ENCODE measurements at regions of chr11 and their contacts with region 1.

Region 1: DNA sequence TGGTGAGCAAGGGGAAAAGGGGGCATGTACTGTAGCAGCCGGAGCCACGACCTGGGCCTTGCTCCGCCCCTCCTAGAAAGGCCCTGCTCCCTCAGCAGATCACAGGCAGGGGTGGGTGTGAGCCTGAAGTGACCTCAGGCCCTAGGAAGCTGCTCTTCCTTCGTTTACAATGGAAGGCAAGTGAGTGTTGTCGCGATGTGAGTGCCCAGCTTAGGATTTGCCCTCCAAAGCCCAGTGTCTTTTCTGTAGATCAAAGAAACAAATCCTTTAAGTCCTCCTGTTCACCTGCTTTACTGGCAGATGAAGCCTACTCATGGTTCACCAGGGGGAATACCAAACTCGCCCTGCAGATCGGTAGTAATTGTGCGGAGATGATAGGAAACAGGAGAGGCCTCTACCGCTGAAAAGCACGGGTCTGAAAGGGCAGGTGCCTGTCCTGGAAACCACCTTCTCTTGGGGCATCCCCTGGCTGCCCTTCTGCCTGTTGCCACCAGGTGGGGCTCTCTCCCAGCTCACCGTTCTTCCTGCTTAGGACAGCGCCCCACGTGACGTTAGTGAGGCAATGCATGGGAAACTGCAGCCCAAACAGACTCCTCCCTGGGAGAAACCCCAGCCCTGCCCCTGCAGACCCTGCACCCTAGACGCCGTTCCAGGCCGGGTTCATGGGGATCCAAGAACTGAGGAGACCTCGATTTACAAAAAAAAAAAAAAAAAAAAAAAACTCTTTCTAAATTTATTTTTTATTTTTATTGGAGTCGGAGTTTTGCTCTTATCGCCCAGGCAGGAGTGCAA is 45.9 kb upstream of the RAB1B start:
- DNase-seq: peak; percentile 97
- H3K4me3 ChIP-seq: no peak overlapping the region
- H3K27ac ChIP-seq: no peak overlapping the region
- H3K4me1 ChIP-seq: peaks cover 0 to 7% (median 6%) of the 10 kb centered on the region in 4 donors
- H3K27me3 ChIP-seq: no peaks in the 10 kb centered on the region
- CTCF ChIP-seq: peak; percentile 98 to 100 (median 98)
- EP300 ChIP-seq: no peak
- POLR2A ChIP-seq: no peak

Region 2: GRCh38 chr11:66258473-66258893 is 35.9 kb after region 1 on chr11:
- intact Hi-C with region 1: loop called (anchors 1 kb)
- DNase-seq: no peak
- H3K4me3 ChIP-seq: peak overlapping the region; percentile 82 to 100 (median 90)
- H3K27ac ChIP-seq: peak overlapping the region; percentile 83 to 89 (median 86)
- H3K4me1 ChIP-seq: peaks cover 14 to 23% (median 21%) of the 10 kb centered on the region in 4 donors
- H3K27me3 ChIP-seq: no peaks in the 10 kb centered on the region
- CTCF ChIP-seq: peak in 1 of 3 experiments; percentile 2
- EP300 ChIP-seq: no peak
- POLR2A ChIP-seq: no peak

Region 3: GRCh38 chr11:66282468-66283386 is 60.2 kb after region 1 on chr11:
- intact Hi-C with region 1: loop called (anchors 5 kb)
- DNase-seq: peak; percentile 99
- H3K4me3 ChIP-seq: no peak overlapping the region
- H3K27ac ChIP-seq: no peak overlapping the region
- H3K4me1 ChIP-seq: peaks cover 29 to 60% (median 37%) of the 10 kb centered on the region in 4 donors
- H3K27me3 ChIP-seq: no peaks in the 10 kb centered on the region
- CTCF ChIP-seq: peak; percentile 96 to 99 (median 96)
- EP300 ChIP-seq: no peak
- POLR2A ChIP-seq: no peak

Region 4: DNA sequence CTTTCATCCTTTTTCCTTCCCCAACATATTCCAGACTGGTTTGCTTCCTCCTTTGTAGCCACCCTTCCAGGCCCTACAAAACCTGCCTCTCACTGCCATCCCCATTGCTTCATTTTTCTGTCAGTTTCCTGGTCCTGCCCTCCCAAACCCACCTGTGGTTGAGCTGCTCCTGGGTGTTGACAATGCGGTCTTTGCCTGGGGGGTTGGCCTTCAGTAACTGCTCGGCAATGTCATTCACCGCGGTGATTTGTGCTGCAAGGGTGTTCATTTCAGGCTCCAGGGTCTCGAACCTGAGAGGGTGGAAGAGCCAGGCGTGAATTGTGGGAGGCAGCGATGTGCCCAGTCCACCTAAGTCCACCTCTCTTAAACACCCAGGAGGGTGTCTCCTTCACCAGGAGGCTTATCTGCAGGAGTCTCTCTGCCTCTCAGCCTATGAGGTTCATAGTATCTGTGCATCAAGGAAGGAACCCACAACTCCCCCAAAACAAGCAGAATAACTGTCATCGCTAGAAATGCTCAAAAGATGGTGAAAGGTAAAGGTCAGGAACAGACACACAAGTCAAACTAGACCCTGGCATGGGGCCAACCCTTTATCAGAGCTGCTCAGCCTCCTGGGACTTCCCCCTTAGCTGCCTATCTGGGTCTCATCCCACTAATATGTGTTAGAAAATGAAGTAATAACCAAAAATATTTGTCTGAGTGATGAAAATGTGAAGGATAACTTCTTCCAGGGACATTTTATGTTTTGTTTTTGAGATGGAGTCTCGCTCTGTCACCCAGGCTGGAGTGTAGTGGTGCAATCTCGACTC is 479.1 kb after region 1 on chr11:
- intact Hi-C with region 1: no loop called
- DNase-seq: no peak
- H3K4me3 ChIP-seq: no peak overlapping the region
- H3K27ac ChIP-seq: no peak overlapping the region
- H3K4me1 ChIP-seq: no peaks in the 10 kb centered on the region
- H3K27me3 ChIP-seq: no peaks in the 10 kb centered on the region
- CTCF ChIP-seq: no peak
- EP300 ChIP-seq: no peak
- POLR2A ChIP-seq: no peak

Measured in esophagus muscularis mucosa (tissue), 4 donors.